Psoas muscle (tissue), 8 donors: ENCODE measurements at regions of chr17 and their contacts with region 1.

Region 1: DNA sequence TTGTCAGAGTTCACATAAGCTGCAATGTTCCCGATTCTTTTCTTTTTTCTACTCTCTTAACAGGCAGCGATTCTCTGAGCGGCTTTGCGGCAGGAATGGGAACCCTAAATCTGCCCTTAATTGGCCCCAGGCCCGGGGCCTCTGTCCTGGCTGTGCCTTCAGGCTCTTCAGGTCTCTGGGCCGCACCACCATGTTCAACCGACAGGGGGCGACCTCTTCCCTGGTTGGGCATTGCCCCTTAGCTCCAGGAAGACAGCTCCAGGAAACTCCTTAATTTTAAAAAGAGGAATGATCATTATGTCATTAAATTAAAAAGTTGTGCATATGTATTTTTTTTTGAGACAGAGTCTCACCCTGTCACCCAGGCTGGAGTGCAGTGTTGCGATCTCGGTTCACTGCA is 20.3 kb downstream of the CACNG5 start:
- DNase-seq: no peak
- ATAC-seq: no peak
- H3K4me3 ChIP-seq: no peak overlapping the region
- H3K27ac ChIP-seq: no peak overlapping the region
- H3K4me1 ChIP-seq: peaks cover 9% of the 10 kb centered on the region
- H3K27me3 ChIP-seq: no peaks in the 10 kb centered on the region
- CTCF ChIP-seq: no peak

Region 2: DNA sequence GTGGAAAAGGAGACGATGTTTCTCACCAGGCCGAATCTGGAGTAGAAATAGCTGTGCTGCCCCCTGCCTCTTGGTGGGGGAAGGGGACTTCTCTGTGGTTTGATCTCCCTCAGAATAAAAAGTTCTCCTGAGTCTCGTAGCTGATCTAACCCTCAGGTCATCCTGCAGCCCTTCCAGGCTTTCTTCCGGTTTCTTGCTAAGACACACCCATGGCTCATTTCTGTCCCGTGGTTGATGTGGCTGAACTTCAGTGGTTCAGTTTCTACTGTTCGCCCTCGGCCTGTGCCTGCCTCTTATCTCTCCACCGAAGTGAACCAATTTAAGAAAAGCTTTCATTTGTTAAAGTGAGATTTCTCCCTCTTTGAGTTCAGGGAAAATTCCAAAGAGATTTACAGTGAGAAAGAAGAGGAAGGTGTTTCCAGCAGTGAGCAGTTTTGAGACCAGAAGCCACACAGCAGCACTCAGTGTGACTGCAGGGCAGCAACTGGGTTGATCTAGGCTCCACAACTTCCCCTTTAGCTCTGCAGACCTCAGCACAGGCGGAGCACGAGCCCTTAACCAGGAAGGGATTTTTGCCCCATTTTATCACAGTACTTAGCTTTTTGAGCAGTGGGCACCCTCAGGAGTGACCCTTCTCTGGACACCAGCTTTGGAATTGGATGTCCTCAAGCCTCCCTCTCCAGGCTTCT is 55.2 kb before region 1 on chr17:
- intact Hi-C with region 1: loop called in 1 of 2 experiments (anchors 5 kb)
- DNase-seq: no peak
- ATAC-seq: no peak
- H3K4me3 ChIP-seq: no peak overlapping the region
- H3K27ac ChIP-seq: no peak overlapping the region
- H3K4me1 ChIP-seq: no peaks in the 10 kb centered on the region
- H3K27me3 ChIP-seq: no peaks in the 10 kb centered on the region
- CTCF ChIP-seq: no peak

Region 3: GRCh38 chr17:67260170-67261011 is 405.2 kb after region 1 on chr17:
- intact Hi-C with region 1: no loop called
- DNase-seq: peak in 1 of 2 donors; percentile 20
- ATAC-seq: peak in 3 of 4 donors; percentile 59 to 73 (median 62)
- H3K4me3 ChIP-seq: no peak overlapping the region
- H3K27ac ChIP-seq: no peak overlapping the region
- H3K4me1 ChIP-seq: no peaks in the 10 kb centered on the region
- H3K27me3 ChIP-seq: no peaks in the 10 kb centered on the region
- CTCF ChIP-seq: no peak